B cell (primary cell): ENCODE measurements at regions of chr17 and their contacts with region 1.

Region 1: GRCh38 chr17:27760069-27760885 is 40.1 kb downstream of the NOS2 start:
- DNase-seq: peak; percentile 72
- ATAC-seq: peak; percentile 56
- H3K4me3 ChIP-seq: no peak overlapping the region
- H3K4me3 Mint-ChIP-seq: no peak overlapping the region
- H3K27ac ChIP-seq: no peak overlapping the region
- H3K27ac Mint-ChIP-seq: no peak overlapping the region
- H3K4me1 ChIP-seq: no peaks in the 10 kb centered on the region
- H3K4me1 Mint-ChIP-seq: peaks cover 3% of the 10 kb centered on the region
- H3K27me3 ChIP-seq: peaks cover 0 to 3% (median 1%) of the 10 kb centered on the region in 4 experiments
- H3K27me3 Mint-ChIP-seq: peaks cover 15% of the 10 kb centered on the region
- CTCF ChIP-seq: peak; percentile 96

Region 2: DNA sequence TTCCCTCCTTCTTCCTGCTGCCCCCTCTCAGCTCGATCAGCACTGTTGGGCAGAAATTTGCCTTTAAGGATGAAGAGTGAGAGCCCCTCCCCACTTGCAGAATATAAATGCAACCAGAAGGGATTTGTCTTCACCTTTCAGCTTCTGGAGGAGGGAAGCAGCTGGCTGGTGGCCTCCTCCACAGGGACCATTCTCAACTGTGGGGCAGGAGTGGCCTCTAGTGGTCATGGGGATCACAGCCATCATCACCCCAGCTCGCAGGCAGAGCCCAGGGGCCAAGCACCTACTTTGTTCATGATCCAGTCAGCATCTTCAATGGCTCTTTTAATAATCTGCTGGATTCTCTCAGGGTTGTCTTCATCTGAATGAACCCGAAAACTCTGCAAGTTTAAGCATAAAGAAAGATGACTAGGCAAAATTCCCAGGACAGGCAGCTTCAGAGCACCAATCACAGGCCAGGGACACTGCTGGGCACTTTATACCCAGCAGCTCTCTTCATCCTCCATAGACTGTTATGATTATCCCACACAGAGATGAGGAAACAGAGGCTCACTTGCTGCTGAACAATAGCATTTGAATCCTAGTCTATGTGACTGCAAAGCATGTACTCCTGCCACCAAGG is 119.8 kb after region 1 on chr17:
- CTCF ChIA-PET with region 1: interaction called, 181 read pairs
- POLR2A ChIA-PET with region 1: no interaction called
- intact Hi-C with region 1: no loop called
- DNase-seq: peak; percentile 71
- ATAC-seq: peak; percentile 74
- H3K4me3 ChIP-seq: no peak overlapping the region
- H3K4me3 Mint-ChIP-seq: no peak overlapping the region
- H3K27ac ChIP-seq: no peak overlapping the region
- H3K27ac Mint-ChIP-seq: no peak overlapping the region
- H3K4me1 ChIP-seq: no peaks in the 10 kb centered on the region
- H3K4me1 Mint-ChIP-seq: no peaks in the 10 kb centered on the region
- H3K27me3 ChIP-seq: no peaks in the 10 kb centered on the region
- H3K27me3 Mint-ChIP-seq: no peaks in the 10 kb centered on the region
- CTCF ChIP-seq: peak; percentile 77

Region 3: GRCh38 chr17:27892866-27893769 is 132.8 kb after region 1 on chr17 and contains the start of gene LYRM9:
- CTCF ChIA-PET with region 1: interaction called, 25 read pairs
- POLR2A ChIA-PET with region 1: no interaction called
- intact Hi-C with region 1: no loop called
- DNase-seq: peak; percentile 93
- ATAC-seq: peak; percentile 98
- H3K4me3 ChIP-seq: peak within 1 kb of the TSS; percentile 58 to 82 (median 71)
- H3K4me3 Mint-ChIP-seq: peak within 1 kb of the TSS; percentile 80
- H3K27ac ChIP-seq: peak within 1 kb of the TSS; percentile 12 to 57
- H3K27ac Mint-ChIP-seq: peak within 1 kb of the TSS; percentile 77
- H3K4me1 ChIP-seq: peaks cover 16 to 23% of the 10 kb centered on the region in 2 donors
- H3K4me1 Mint-ChIP-seq: peaks cover 23% of the 10 kb centered on the region
- H3K27me3 ChIP-seq: no peaks in the 10 kb centered on the region
- H3K27me3 Mint-ChIP-seq: peaks cover 4% of the 10 kb centered on the region
- CTCF ChIP-seq: peak; percentile 91
- total RNA-seq, gene LYRM9: 12.1 and 14.0 TPM in 2 replicates

Region 4: GRCh38 chr17:28252436-28252835 is 492.2 kb after region 1 on chr17:
- CTCF ChIA-PET with region 1: interaction called, 19 read pairs
- POLR2A ChIA-PET with region 1: no interaction called
- intact Hi-C with region 1: no loop called
- DNase-seq: no peak
- ATAC-seq: no peak
- H3K4me3 ChIP-seq: no peak overlapping the region
- H3K4me3 Mint-ChIP-seq: no peak overlapping the region
- H3K27ac ChIP-seq: no peak overlapping the region
- H3K27ac Mint-ChIP-seq: no peak overlapping the region
- H3K4me1 ChIP-seq: peaks cover 10 to 12% of the 10 kb centered on the region in 2 donors
- H3K4me1 Mint-ChIP-seq: peaks cover 7% of the 10 kb centered on the region
- H3K27me3 ChIP-seq: peaks cover 0 to 48% (median 16%) of the 10 kb centered on the region in 4 experiments
- H3K27me3 Mint-ChIP-seq: peaks cover 33% of the 10 kb centered on the region
- CTCF ChIP-seq: no peak